Aorta (tissue), 5 donors: ENCODE measurements at regions of chr17 and their contacts with region 1.

Region 1: GRCh38 chr17:55421179-55421934 is at the start of gene MMD:
- DNase-seq: peak in 1 of 2 donors; percentile 59
- ATAC-seq: peak; percentile 37
- H3K4me3 ChIP-seq: peak within 1 kb of the TSS; percentile 93 to 100
- H3K27ac ChIP-seq: no peak within 1 kb of the TSS
- H3K4me1 ChIP-seq: peaks cover 0 to 3% of the 10 kb centered on the region in 2 donors
- H3K27me3 ChIP-seq: no peaks in the 10 kb centered on the region
- total RNA-seq, gene MMD: 9.4 to 13.9 TPM

Region 2: DNA sequence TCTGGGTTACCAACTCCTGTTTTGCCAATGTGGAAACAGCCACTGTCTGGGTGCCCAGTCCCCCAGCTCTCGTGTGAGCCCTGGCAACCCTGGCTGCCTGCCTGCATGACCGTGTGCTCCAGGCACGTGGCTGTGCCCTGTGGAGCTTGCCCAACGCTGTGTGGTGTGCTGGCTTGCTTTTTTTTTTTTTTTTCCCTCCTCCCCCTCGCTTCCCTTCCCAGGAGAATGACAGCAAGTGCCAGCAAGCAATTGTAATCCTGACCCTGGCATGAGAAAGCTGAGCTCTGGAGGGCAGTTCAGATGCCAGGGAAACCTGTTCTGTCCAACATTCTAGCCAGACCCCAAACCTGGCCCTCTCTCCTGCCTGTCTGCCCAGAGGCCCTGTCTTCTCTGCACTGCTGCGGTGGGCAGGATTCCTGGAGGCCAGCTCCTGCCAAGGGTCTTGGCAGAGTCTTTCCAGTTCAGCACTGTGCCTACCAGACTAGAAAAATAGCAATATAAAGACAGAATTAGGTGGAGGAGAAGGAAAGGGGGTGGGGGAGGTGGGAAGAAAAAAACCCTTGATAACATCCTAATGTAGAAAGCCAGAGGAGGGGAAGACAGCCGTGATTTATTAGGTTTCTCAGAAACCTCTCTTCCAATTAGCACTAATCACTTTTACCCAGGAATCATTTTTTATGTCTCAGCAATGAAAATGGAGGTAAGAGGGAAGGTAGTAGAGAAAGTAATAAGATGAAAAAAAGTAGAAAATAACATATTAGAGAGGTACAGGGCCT is 147.6 kb before region 1 on chr17:
- intact Hi-C with region 1: loop called in 1 of 2 experiments (anchors 5 kb)
- DNase-seq: peak; percentile 84 to 92
- ATAC-seq: peak; percentile 90
- H3K4me3 ChIP-seq: no peak overlapping the region
- H3K27ac ChIP-seq: peak overlapping the region; percentile 23 to 98
- H3K4me1 ChIP-seq: peaks cover 8 to 28% of the 10 kb centered on the region in 2 donors
- H3K27me3 ChIP-seq: no peaks in the 10 kb centered on the region

Region 3: GRCh38 chr17:55735731-55736405 is 314.5 kb after region 1 on chr17:
- intact Hi-C with region 1: loop called in 1 of 2 experiments (anchors 10 kb)
- DNase-seq: no peak
- ATAC-seq: no peak
- H3K4me3 ChIP-seq: no peak overlapping the region
- H3K27ac ChIP-seq: no peak overlapping the region
- H3K4me1 ChIP-seq: no peaks in the 10 kb centered on the region
- H3K27me3 ChIP-seq: no peaks in the 10 kb centered on the region

Region 4: GRCh38 chr17:55750750-55751657 is 329.6 kb after region 1 on chr17 and contains the start of gene PCTP:
- intact Hi-C with region 1: loop called in 1 of 2 experiments (anchors 5 kb)
- DNase-seq: peak; percentile 98
- ATAC-seq: peak; percentile 99
- H3K4me3 ChIP-seq: peak within 1 kb of the TSS; percentile 38 to 85
- H3K27ac ChIP-seq: peak within 1 kb of the TSS in 1 of 2 donors; percentile 55
- H3K4me1 ChIP-seq: peaks cover 0 to 8% of the 10 kb centered on the region in 2 donors
- H3K27me3 ChIP-seq: no peaks in the 10 kb centered on the region
- total RNA-seq, gene PCTP: 8.9 to 11.2 TPM